Dendritic cell treated with granulocyte-macrophage colony-stimulating factor and Interleukin-4, amounts not matched to agents 40 ng/mL and 50 ng/mL, for 4 days (primary cell): ENCODE measurements at regions of chr1 and their contacts with region 1.

Region 1: GRCh38 chr1:2381741-2382620 is 9.4 kb downstream of the MORN1 start:
- H3K4me3 Mint-ChIP-seq: no peak overlapping the region
- H3K27ac Mint-ChIP-seq: peak overlapping the region; percentile 54
- H3K4me1 Mint-ChIP-seq: peaks cover 25% of the 10 kb centered on the region
- H3K27me3 Mint-ChIP-seq: no peaks in the 10 kb centered on the region

Region 2: GRCh38 chr1:1873186-1873585 is 508.8 kb before region 1 on chr1:
- intact Hi-C with region 1: no loop called
- H3K4me3 Mint-ChIP-seq: no peak overlapping the region
- H3K27ac Mint-ChIP-seq: no peak overlapping the region
- H3K4me1 Mint-ChIP-seq: peaks cover 74% of the 10 kb centered on the region
- H3K27me3 Mint-ChIP-seq: no peaks in the 10 kb centered on the region

Region 3: DNA sequence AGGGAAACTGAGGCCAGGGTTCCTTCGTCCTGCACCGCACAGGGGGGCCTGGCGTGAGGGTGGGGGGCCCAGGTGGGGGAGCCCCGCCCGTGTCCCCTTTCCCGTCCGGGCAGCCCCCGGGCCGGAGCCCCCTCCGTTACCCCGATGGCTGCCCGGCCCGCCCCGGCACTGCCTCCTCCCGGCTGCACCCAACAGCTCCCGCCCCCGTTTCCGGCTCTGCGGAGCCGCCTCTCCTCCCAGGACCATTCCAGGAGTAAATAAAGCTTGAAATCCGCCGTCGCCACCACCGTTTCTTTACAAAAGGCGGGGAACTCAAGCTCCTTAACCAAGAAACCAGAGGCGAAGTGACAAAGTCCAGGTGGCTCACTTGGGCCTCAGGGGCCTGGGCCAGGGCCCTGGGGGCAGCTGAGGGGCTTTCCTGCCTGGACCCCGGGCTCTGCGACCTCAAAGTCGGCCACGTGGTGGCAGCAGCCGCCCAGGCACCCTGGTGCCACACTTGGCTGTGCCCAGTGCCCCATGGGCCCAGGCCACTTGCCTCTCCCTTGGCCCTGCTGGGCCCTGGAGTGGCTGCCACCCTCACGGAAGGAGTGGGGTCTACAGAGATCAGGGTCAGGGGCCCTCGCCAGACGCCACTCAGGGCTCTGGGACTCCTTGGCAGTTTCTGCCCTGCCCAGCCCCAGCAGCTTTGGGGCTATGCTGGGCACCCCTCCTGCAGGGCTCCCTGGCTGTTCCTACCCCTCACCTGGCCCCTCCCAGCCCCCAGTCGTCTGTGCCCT is 186.9 kb before region 1 on chr1:
- intact Hi-C with region 1: loop called (anchors 1 kb)
- H3K4me3 Mint-ChIP-seq: peak overlapping the region; percentile 80
- H3K27ac Mint-ChIP-seq: peak overlapping the region; percentile 91
- H3K4me1 Mint-ChIP-seq: peaks cover 52% of the 10 kb centered on the region
- H3K27me3 Mint-ChIP-seq: no peaks in the 10 kb centered on the region

Region 4: DNA sequence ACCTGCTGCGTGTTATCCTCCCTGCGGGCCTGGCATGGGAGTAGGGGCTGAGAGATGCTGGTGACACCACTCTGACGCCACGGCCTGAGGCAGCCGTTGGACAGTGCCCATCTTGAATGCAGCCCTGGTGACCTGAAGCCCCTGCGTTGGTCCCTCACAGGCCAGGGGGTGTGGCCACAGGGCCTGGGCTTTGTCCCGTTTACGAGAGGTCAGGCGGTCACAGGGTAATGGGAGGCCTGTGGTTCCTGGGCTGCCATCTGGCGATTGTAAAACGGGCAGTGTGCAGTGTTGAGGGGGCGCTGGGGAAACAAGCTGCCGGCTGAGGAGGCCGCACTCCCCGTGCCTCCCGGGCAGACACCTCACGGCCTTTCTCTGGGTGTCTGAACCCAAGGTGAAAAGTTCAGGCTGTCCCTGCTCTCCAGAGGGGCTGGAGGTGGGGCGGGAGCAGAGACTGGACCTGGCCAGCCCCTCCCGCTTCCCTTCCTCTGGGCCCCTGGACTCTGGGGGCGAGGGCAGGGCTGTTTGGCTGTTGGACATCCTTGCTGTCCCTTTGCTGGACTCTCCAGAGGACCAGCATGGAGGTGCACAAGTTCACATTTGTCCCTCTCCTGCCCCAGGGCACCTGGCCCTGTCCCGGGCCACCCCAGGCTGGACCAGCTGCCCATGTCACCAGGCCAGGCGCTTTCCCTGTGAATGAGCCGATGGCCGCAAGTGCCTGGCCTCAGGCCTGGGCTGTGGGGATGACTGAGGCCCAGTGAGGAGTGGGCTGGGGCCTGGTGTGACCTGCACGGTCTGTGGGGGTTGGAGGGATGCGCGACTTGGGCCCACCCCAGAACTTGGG is 111.5 kb before region 1 on chr1:
- intact Hi-C with region 1: no loop called
- H3K4me3 Mint-ChIP-seq: no peak overlapping the region
- H3K27ac Mint-ChIP-seq: no peak overlapping the region
- H3K4me1 Mint-ChIP-seq: peaks cover 92% of the 10 kb centered on the region
- H3K27me3 Mint-ChIP-seq: no peaks in the 10 kb centered on the region